HCT116 (cell line): ENCODE measurements at regions of chr6 and their contacts with region 1.

Region 1: DNA sequence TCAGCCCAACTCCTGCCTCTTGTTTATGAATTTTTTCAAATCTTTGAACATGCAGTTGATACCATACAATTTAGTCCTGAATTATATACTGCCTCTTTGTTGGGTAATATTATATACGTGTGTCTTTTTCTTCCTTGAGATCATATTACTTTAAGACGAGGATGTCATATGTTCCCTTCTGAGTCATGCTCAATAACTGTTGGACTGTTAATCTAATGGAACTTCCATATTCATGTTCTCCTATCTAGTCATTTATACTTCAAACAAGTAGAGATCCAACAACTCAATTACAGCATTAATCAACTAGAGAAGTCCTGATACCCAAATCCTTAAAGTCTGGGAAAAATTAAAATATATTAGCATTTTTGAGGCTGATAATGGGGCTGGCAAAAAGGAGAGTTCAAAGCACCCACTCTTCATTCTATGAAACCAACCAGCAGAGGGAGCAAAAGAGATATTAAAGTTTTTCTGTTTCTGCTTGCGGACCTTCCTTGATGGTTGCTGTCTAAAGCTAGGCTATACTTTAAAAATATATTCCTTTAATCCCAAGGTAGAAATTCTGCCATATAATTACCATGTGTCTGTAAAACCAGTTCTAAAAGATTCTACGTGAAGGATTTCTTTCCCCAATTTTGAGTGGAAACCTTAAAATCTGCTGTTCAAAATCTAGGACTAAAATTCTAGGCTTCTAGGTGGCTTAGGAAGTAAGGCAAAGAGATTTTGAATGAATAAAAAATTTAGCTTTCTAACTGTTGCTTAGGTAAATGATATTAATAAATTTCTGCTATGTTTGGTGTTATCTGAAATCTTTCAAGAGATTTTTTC is 498.9 kb downstream of the BCKDHB start:
- DNase-seq: peak; percentile 42
- ATAC-seq: peak; percentile 89
- H3K4me3 ChIP-seq: no peak overlapping the region
- H3K27ac ChIP-seq: no peak overlapping the region
- H3K4me1 ChIP-seq: peaks cover 0 to 20% of the 10 kb centered on the region in 2 experiments; a peak in 2 of 4 replicates
- H3K27me3 ChIP-seq: no peaks in the 10 kb centered on the region
- CTCF ChIP-seq: peak; percentile 55 to 74 (median 55); a peak in 5 of 6 replicates
- POLR2A ChIP-seq: no peak
- RAD21 ChIP-seq: peak; percentile 79

Region 2: DNA sequence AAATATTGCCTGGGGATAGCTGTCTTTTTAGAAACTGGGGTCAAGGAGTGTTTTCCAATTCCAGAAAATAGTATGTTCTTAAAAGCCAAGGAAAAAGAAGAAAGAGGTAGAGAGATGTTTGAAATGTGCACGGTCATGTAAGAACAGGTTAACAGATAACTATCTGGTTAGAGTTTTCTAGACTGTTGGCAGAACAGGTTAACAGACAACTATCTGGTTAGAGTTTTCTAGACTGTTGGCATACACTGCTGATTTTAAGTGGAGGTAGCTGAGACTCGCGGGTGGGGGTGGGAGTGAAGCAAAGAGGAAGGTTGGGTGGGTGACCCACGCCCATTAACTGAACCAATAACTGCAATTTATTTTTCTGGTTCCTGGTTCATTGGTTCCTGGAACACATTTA is 815.5 kb before region 1 on chr6:
- CTCF ChIA-PET with region 1: no interaction called
- POLR2A ChIA-PET with region 1: no interaction called
- RAD21 ChIA-PET with region 1: no interaction called
- intact Hi-C with region 1: no loop called
- DNase-seq: no peak
- ATAC-seq: no peak
- H3K4me3 ChIP-seq: no peak overlapping the region
- H3K27ac ChIP-seq: no peak overlapping the region
- H3K4me1 ChIP-seq: no peaks in the 10 kb centered on the region
- H3K27me3 ChIP-seq: no peaks in the 10 kb centered on the region
- CTCF ChIP-seq: no peak
- POLR2A ChIP-seq: no peak
- RAD21 ChIP-seq: no peak

Region 3: GRCh38 chr6:81075974-81076373 is 470.6 kb after region 1 on chr6:
- CTCF ChIA-PET with region 1: interaction called, 5 read pairs
- POLR2A ChIA-PET with region 1: no interaction called
- RAD21 ChIA-PET with region 1: no interaction called
- intact Hi-C with region 1: loop called (anchors 5 kb)
- DNase-seq: peak; percentile 21
- ATAC-seq: peak; percentile 80
- H3K4me3 ChIP-seq: no peak overlapping the region
- H3K27ac ChIP-seq: no peak overlapping the region
- H3K4me1 ChIP-seq: no peaks in the 10 kb centered on the region
- H3K27me3 ChIP-seq: no peaks in the 10 kb centered on the region
- CTCF ChIP-seq: peak in 2 of 3 experiments; percentile 75 to 80; a peak in 4 of 6 replicates
- POLR2A ChIP-seq: no peak
- RAD21 ChIP-seq: peak; percentile 47